ENCODE measurements at regions of chr10 and their contacts with region 1.

Region 1: DNA sequence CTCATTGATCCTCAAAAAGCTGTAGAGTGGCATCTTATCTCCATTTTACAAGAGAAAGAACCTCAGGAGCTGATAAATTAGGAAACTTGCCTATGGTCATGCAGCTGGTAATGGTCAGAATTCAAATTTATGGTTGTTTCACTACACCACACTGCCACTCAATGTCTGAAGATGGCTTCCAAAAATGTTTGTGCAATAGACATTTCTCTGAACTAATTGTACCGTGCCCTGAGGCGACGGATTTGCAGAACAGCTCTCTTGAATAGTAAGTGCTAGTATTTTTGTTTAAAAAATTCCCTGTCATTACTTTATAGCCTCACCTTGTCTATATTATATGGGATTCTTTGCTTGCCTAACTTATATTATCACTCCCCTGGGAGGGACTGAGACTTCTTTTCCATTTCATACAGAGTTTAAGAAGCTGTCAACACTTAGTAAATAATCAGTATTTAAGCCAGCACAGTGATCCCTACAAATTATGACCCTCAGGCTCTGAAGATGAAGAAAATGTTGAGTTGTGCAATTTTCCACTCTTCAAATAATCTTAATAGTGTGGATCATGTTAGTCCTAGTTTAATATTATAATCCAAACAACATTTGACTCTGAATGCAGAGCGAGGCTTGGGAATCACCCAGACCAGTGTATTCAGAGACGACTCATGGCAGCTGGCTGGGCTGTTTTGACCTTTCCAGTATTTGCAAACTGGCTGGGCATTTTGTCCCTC is 346.6 kb downstream of the PTEN start:
- DNase-seq: peak; percentile 72
- H3K4me3 Mint-ChIP-seq: peak overlapping the region; percentile 12
- H3K27ac Mint-ChIP-seq: peak overlapping the region; percentile 43
- H3K4me1 Mint-ChIP-seq: peaks cover 29% of the 10 kb centered on the region
- H3K27me3 Mint-ChIP-seq: no peaks in the 10 kb centered on the region
- CTCF ChIP-seq: no peak

Region 2: DNA sequence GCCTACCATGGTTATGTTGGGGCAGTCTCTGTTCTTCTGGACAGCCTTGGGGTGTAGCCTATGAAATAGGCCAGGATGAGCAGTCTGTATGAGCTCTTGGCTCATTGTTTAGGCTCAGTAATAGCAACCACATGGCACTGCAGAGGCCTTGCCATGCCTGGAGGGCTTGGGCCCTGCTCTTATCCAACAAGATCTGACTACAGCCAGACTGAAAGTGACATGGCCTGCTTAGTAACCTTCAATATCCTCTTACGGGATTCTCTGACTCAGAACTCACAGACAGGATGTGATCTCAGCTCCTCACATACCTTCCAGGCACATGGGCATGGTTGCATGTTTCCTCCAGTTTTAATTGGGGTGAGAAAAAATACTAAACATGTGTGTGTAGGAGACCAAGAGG is 57.3 kb before region 1 on chr10:
- CTCF ChIA-PET with region 1: no interaction called
- POLR2A ChIA-PET with region 1: interaction called, 17 read pairs
- intact Hi-C with region 1: no loop called
- DNase-seq: peak; percentile 95
- H3K4me3 Mint-ChIP-seq: no peak overlapping the region
- H3K27ac Mint-ChIP-seq: peak overlapping the region; percentile 91
- H3K4me1 Mint-ChIP-seq: peaks cover 35% of the 10 kb centered on the region
- H3K27me3 Mint-ChIP-seq: no peaks in the 10 kb centered on the region
- CTCF ChIP-seq: no peak

Region 3: GRCh38 chr10:88318803-88319202 is 108.8 kb after region 1 on chr10:
- CTCF ChIA-PET with region 1: no interaction called
- POLR2A ChIA-PET with region 1: no interaction called
- intact Hi-C with region 1: loop called (anchors 10 kb)
- DNase-seq: peak; percentile 9
- H3K4me3 Mint-ChIP-seq: no peak overlapping the region
- H3K27ac Mint-ChIP-seq: no peak overlapping the region
- H3K4me1 Mint-ChIP-seq: peaks cover 5% of the 10 kb centered on the region
- H3K27me3 Mint-ChIP-seq: no peaks in the 10 kb centered on the region
- CTCF ChIP-seq: peak; percentile 29